HEK293T (cell line): ENCODE measurements at regions of chr3 and their contacts with region 1.

Region 1: GRCh38 chr3:11651900-11652299 is 8.2 kb upstream of the VGLL4 start:
- DNase-seq: no peak

Region 2: GRCh38 chr3:11379233-11379823 is 272.6 kb before region 1 on chr3:
- CTCF ChIA-PET with region 1: interaction called, 29 read pairs
- POLR2A ChIA-PET with region 1: no interaction called
- DNase-seq: peak; percentile 30